Activated naive CD4-positive, alpha-beta T cell treated with anti-CD3 and anti-CD28 coated beads for 36 hours (primary cell): ENCODE measurements at regions of chr1 and their contacts with region 1.

Region 1: DNA sequence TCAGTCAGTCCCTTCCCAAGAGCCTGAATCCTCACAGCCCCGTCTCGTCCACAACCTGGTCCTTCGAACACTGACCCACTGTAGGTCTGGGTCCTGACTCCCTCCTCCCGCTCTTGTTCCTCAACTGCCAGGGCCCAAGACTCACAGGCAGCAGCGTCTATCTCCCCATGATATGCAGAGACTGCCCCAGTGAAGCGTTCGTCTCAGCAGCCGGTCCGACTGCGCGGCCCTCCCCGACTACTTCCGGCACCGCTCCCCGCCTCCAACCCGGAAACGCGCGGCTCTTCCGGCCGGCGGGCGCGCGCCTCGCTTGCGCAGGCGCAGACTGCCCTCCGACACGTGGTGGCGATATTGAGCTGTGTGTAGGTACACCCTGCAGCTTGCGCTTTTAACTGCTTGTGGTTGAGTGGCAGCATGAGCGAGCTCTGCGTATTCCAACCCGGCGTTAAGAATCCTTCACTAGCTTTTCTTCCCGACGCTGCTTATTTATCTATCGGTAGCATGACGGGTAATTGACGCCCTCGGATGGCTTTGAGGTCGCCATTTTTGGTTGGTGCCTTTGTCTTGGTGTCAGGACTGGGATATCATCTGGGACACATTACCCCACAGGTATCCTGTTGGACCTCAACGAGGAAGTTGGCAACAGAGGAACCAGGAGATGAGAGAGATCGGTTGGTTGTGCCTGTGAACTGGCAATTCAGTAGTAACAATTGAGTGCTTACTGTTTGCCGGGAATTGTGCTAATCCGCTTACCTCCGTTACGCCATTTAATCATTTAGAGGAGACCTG is at the start of gene TAF12:
- DNase-seq: peak; percentile 93
- H3K4me3 Mint-ChIP-seq: peak within 1 kb of the TSS; percentile 96
- H3K27ac Mint-ChIP-seq: peak within 1 kb of the TSS; percentile 94
- H3K4me1 Mint-ChIP-seq: peaks cover 44% of the 10 kb centered on the region
- H3K27me3 Mint-ChIP-seq: no peaks in the 10 kb centered on the region
- total RNA-seq, gene TAF12: 22.5 to 23.5 TPM

Region 2: DNA sequence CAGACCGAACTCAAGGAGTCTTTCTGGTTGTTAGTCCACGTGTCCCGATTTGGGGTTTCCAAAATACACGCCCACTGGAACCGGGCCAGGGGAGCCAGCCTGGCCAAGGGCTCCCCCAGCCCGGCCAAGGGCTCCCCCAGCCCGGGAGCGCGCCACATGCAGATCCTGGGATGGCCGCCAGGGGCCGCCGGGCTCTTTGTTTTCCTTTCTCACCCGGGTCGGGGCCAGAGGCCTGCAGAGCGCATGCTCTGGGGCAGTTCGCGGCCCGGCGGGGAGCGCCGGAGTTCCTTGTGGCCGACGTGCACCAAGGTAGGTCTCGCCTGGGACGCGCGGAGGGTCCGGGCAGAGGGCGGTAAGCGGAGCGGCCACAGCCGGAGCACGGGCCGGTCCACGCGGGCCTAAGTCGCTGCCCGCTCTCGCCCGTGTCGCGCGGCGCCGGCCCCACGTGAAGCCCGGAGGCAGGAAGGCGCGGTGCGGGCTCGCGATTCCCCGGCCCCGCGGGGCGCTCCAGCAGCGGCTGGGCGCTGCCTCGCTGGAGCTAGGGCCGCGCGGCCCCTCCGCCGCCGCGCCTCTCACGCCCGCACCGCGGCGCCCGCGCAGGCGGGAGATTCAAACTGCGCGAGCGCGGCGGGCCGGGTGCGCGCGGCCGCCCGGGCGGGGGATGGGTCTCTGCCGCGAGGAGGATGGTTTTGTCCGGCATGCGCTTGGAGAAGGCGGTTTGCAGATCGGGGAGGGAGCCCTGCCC is 124.9 kb before region 1 on chr1:
- CTCF ChIA-PET with region 1: no interaction called
- intact Hi-C with region 1: loop called (anchors 2 kb)
- DNase-seq: peak; percentile 92
- H3K4me3 Mint-ChIP-seq: peak overlapping the region; percentile 90
- H3K27ac Mint-ChIP-seq: peak overlapping the region; percentile 91
- H3K4me1 Mint-ChIP-seq: peaks cover 38% of the 10 kb centered on the region
- H3K27me3 Mint-ChIP-seq: no peaks in the 10 kb centered on the region

Region 3: DNA sequence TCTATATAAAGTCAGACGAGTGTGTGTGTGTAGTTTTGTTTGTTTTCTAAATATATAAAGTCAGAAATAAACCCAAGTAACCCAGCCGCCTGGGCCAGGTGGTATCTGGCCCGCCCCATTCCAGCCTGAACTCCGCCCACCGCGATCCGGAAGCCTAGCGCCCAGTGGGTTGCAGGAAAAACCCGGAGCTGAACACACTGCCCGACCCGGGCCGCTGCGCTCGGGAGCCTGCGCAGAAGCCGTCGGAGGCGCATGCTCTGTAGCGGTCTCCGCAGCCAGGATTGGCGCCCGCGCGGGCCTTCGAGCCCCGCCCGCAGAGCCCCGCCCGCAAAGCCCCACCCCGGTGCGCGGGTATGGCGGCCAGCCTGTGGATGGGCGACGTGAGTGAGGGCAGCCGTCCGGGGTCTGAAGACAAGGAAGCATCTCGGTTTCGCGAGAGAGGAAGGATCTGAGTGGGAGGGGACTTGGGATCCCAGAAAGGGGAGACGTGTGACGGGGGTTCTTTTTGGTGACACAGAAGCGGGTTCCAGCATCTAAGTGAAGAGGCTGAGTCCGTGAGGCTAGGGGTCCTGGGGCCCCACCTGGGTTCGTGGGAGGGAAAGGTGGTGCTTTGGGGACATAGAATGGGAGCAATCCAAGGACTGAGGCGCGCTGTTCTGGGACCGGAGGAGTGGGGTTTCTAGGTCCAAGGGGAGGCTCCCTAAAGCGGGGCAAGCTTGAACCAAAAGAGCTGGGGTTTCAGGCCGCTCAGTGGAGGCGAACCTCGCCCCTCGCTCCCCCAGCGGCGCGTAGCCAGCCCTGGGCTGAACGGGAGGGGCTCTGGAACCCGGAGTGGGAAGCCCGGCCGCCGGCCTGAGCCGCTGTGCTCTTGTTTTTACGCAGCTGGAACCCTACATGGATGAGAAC is 90.0 kb before region 1 on chr1 and contains the start of gene TRNAU1AP:
- CTCF ChIA-PET with region 1: no interaction called
- intact Hi-C with region 1: loop called (anchors 1 kb)
- DNase-seq: peak; percentile 99
- H3K4me3 Mint-ChIP-seq: peak within 1 kb of the TSS; percentile 94
- H3K27ac Mint-ChIP-seq: peak within 1 kb of the TSS; percentile 97
- H3K4me1 Mint-ChIP-seq: peaks cover 19% of the 10 kb centered on the region
- H3K27me3 Mint-ChIP-seq: no peaks in the 10 kb centered on the region
- total RNA-seq, gene TRNAU1AP: 36.7 to 39.4 TPM

Region 4: DNA sequence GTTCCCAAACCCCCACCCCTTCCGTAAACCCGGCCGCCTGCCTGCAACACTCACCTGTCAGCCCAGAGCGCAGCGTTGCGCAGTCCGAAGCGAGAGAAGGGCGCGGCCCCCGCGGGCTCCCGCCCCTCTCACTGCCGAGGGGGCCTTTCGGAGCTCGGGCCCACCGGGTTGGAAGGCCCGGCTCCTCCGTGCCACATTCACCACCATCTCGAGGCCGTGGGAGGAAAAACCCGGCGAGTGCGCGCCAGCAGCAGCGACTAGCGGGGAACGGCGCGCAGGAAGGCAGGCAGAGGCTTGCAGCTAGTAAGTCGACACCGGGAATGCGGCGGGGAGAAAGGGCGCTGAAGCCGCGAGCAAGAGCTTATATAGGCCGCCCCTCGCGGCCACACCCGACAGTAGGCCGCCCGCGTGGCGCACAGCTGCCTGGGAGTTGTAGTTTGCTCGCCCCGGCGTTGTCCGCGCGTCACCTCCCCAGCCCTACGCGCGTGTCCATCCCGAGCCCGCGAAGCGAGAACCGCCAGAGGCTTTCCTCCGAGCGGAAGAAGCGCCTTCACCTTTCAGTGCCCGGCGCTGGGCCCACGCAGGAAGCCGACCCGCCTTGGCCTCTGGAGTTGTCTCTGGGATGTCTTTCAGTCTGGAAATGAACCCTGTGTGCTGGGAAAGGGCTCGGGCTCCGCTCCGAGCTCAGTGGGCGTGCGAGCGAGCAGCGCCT is 61.3 kb before region 1 on chr1:
- CTCF ChIA-PET with region 1: no interaction called
- intact Hi-C with region 1: loop called (anchors 1 kb)
- DNase-seq: peak; percentile 94
- H3K4me3 Mint-ChIP-seq: peak overlapping the region; percentile 98
- H3K27ac Mint-ChIP-seq: peak overlapping the region; percentile 94
- H3K4me1 Mint-ChIP-seq: peaks cover 29% of the 10 kb centered on the region
- H3K27me3 Mint-ChIP-seq: no peaks in the 10 kb centered on the region

Region 5: DNA sequence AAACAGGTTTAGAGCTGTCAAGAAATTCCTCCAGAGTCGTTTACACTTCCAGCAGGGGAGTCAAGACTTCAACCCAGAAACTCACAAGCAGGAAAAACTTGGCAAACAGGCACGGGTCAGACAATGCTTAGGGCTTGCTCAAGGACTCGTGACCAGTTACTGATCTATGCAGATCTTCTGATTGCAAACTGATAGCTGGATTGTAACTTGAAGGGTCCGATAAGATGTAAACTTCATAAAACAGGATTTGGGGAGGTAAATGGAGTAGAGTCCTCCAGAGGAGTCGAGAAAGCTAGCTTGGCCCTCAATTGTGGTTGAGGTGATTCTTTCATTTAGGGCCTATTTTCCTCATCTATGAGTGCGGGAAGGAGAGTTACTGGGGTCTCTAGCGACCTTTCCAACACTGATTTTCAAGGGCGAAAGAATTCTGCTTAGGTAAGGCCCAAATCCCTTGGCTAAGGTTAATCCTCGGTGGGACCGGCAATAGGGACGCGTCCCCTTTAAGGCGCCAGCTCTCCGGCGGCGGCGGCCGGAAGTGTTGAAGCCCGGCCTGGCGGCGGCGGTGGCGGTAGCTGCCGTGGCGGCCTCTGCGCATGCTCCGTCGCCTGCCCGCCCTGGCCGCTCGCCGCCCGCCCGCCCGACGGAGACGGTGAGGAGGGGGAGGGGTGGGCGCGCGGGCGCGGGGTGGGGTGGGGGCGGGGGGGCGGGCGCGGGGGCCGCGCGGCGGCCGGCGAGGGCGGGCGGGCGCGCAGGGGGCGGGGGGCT is 25.3 kb after region 1 on chr1 and contains the start of gene GMEB1:
- CTCF ChIA-PET with region 1: interaction called, 4 read pairs
- intact Hi-C with region 1: loop called (anchors 1 kb)
- DNase-seq: peak; percentile 87
- H3K4me3 Mint-ChIP-seq: peak within 1 kb of the TSS; percentile 86
- H3K27ac Mint-ChIP-seq: peak within 1 kb of the TSS; percentile 96
- H3K4me1 Mint-ChIP-seq: peaks cover 11% of the 10 kb centered on the region
- H3K27me3 Mint-ChIP-seq: no peaks in the 10 kb centered on the region
- total RNA-seq, gene GMEB1: 15.8 to 16.3 TPM

Region 6: DNA sequence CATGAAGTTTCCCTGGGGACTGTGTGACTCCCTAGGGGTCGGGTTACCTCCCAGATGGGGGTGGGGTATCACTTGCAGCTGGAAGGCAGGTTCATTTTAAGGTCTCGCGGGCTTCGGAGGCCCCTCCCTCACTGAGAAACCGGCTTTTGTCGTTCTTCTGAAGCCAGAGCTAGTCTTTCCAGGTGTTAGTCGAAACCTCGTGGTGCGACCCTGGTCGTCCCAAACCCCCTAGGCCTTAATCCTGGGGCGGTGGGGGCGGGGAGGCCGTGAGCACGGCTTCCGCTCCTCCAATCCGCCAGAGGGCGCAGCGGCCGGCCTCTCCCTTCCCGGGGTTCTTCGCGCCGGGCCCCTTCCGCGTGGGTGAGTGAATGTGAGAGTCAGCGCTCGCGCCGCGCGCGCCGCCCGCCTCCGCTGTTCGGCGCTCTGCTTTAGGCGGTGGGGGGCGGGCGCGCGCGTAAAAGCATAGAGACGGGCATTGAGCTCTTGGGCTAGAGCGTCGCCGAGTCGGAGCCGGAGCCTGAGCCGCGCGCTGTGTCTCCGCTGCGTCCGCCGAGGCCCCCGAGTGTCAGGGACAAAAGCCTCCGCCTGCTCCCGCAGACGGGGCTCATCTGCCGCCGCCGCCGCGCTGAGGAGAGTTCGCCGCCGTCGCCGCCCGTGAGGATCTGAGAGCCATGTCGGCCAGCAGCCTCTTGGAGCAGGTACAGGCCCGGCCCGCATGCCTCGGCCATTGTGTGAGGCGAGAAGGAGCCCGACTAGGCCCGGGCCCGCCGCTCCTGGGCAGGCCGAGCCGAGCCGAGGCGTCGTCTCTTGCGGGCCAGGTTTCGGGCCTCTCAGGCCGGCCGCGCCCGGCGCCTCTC is 93.6 kb after region 1 on chr1 and contains the start of gene YTHDF2:
- CTCF ChIA-PET with region 1: interaction called, 11 read pairs
- intact Hi-C with region 1: loop called (anchors 1 kb)
- DNase-seq: peak; percentile 99
- H3K4me3 Mint-ChIP-seq: peak within 1 kb of the TSS; percentile 96
- H3K27ac Mint-ChIP-seq: peak within 1 kb of the TSS; percentile 92
- H3K4me1 Mint-ChIP-seq: peaks cover 33% of the 10 kb centered on the region
- H3K27me3 Mint-ChIP-seq: no peaks in the 10 kb centered on the region
- total RNA-seq, gene YTHDF2: 64.9 to 66.1 TPM

Region 7: DNA sequence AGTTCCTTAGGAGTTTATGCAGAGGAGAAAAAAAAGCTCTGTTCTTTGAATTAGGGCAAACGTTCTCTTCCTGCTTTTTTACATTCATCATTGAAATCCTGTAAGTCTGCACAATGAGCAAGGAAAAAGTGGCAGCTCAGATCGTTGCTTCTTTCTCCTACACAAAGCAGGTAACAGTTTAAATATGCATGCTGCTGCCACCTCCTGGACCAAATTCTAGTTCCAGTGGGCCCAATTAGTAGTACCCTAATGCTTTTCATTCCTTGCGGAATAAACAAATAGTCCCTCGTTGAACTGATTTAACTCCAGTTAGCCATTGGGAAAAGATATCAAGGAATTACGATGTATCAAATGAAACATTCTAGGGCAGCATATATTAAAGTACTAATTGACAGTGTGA is 113.8 kb after region 1 on chr1:
- CTCF ChIA-PET with region 1: no interaction called
- intact Hi-C with region 1: loop called (anchors 5 kb)
- DNase-seq: peak; percentile 22
- H3K4me3 Mint-ChIP-seq: no peak overlapping the region
- H3K27ac Mint-ChIP-seq: no peak overlapping the region
- H3K4me1 Mint-ChIP-seq: peaks cover 31% of the 10 kb centered on the region
- H3K27me3 Mint-ChIP-seq: no peaks in the 10 kb centered on the region